ENCODE measurements at regions of chr13 and their contacts with region 1.

Region 1: GRCh38 chr13:91017031-91017668 is 330.3 kb upstream of the MIR17HG start:
- DNase-seq: peak; percentile 54
- ATAC-seq: no peak
- H3K4me3 Mint-ChIP-seq: no peak overlapping the region
- H3K27ac Mint-ChIP-seq: no peak overlapping the region
- H3K4me1 Mint-ChIP-seq: no peaks in the 10 kb centered on the region
- H3K27me3 Mint-ChIP-seq: no peaks in the 10 kb centered on the region

Region 2: GRCh38 chr13:90867336-90867683 is 149.8 kb before region 1 on chr13:
- CTCF ChIA-PET with region 1: no interaction called
- POLR2A ChIA-PET with region 1: no interaction called
- intact Hi-C with region 1: loop called in 1 of 2 experiments (anchors 2 kb)
- DNase-seq: peak; percentile 62
- ATAC-seq: peak; percentile 47
- H3K4me3 Mint-ChIP-seq: no peak overlapping the region
- H3K27ac Mint-ChIP-seq: no peak overlapping the region
- H3K4me1 Mint-ChIP-seq: no peaks in the 10 kb centered on the region
- H3K27me3 Mint-ChIP-seq: no peaks in the 10 kb centered on the region